Activated CD4-positive, alpha-beta memory T cell treated with anti-CD3 and anti-CD28 coated beads for 36 hours (primary cell): ENCODE measurements at regions of chr20 and their contacts with region 1.

Region 1: DNA sequence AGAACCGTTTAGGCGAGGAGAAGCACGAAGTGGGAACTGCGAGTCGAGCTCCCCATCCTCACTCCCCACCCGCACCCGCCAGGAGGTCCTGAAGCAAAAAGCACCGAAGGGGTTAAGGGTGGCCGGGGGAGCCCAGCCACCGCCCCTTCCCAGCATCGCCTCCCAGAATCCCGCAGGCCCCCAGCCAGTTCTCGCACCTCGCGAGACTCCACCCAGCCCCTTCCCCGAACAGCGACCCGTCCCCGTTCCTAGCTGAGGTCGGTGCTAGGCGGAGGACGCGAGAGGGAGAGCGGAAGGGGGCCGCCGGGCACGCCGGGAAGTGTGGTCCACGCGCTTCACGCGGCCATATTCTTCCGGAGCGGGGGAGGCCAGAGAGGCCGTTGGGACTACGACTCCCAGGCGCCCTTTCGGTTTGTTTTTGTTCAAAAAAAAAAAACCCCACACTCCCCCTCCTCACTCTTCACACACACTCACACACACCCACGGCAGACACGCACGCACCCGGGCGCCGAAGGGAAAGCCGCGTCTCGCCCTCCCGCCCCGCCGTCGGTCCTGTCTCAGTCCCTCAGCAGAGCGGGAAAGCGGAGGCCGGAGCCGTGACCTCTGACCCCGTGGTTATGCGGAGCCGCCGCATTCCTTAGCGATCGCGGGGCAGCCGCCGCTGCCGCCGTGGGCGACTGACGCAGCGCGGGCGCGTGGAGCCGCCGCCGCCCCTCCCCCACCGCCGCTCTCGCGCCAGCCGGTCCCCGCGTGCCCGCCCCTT is at the start of gene ASXL1:
- DNase-seq: peak; percentile 98
- H3K4me3 Mint-ChIP-seq: peak within 1 kb of the TSS; percentile 95
- H3K27ac Mint-ChIP-seq: peak within 1 kb of the TSS; percentile 99
- H3K4me1 Mint-ChIP-seq: peaks cover 64% of the 10 kb centered on the region
- H3K27me3 Mint-ChIP-seq: no peaks in the 10 kb centered on the region
- total RNA-seq, gene ASXL1: 141 to 147 TPM

Region 2: DNA sequence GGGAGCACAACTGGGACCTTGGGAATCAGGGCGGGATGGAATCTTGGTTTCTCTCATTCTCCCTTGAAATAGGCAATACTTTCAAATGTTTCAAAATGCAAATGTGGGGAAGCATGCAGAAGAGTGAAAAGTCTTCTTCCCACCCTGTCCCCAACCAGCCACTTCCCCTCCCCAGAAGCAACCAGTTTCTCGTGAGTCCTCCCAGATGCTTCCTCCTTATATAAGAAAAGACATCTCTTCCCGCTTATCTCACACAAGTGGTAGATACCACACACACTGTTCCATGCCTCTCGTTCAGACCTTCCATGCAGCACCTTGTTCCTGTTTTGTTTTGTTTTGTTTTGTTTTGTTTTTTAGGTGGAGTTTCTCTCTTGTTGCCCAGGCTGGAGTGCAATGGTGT is 280.9 kb before region 1 on chr20:
- CTCF ChIA-PET with region 1: no interaction called
- POLR2A ChIA-PET with region 1: no interaction called
- intact Hi-C with region 1: no loop called
- DNase-seq: no peak
- H3K4me3 Mint-ChIP-seq: no peak overlapping the region
- H3K27ac Mint-ChIP-seq: no peak overlapping the region
- H3K4me1 Mint-ChIP-seq: no peaks in the 10 kb centered on the region
- H3K27me3 Mint-ChIP-seq: peaks cover 6% of the 10 kb centered on the region

Region 3: GRCh38 chr20:32207626-32208498 is 150.2 kb before region 1 on chr20 and contains the starts of genes PLAGL2 and POFUT1:
- CTCF ChIA-PET with region 1: interaction called, 3 read pairs
- POLR2A ChIA-PET with region 1: interaction called, 62 read pairs
- intact Hi-C with region 1: loop called (anchors 1 kb)
- DNase-seq: peak; percentile 93
- H3K4me3 Mint-ChIP-seq: peak within 1 kb of the TSS; percentile 99
- H3K27ac Mint-ChIP-seq: peak within 1 kb of the TSS; percentile 95
- H3K4me1 Mint-ChIP-seq: peaks cover 65% of the 10 kb centered on the region
- H3K27me3 Mint-ChIP-seq: no peaks in the 10 kb centered on the region
- total RNA-seq, gene PLAGL2: 93.9 to 95.6 TPM
- total RNA-seq, gene POFUT1: 48.4 to 48.5 TPM

Region 4: GRCh38 chr20:32285621-32286371 is 72.3 kb before region 1 on chr20:
- CTCF ChIA-PET with region 1: no interaction called
- POLR2A ChIA-PET with region 1: interaction called, 15 read pairs
- intact Hi-C with region 1: loop called (anchors 1 kb)
- DNase-seq: peak; percentile 69
- H3K4me3 Mint-ChIP-seq: peak overlapping the region; percentile 62
- H3K27ac Mint-ChIP-seq: peak overlapping the region; percentile 91
- H3K4me1 Mint-ChIP-seq: peaks cover 85% of the 10 kb centered on the region
- H3K27me3 Mint-ChIP-seq: no peaks in the 10 kb centered on the region

Region 5: DNA sequence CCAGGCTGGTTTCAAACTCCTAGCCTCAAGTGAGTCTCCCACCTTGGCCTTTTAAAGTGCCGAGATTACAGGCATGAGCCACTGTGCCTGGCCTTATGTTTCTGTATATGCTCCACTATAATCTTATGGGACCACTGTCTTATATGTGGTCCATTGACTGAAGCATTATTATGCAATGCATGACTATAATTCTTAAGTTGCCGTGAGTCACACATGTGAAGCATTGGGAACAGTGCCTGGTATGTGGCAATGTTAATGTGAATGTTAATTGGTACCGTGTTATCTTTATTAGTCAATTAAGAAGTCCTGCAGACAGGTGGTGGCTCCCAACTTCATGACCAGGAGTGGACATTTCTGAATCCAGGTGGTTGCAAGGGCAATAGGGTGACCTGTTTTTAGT is 14.6 kb before region 1 on chr20:
- CTCF ChIA-PET with region 1: no interaction called
- POLR2A ChIA-PET with region 1: no interaction called
- intact Hi-C with region 1: no loop called
- DNase-seq: no peak
- H3K4me3 Mint-ChIP-seq: no peak overlapping the region
- H3K27ac Mint-ChIP-seq: no peak overlapping the region
- H3K4me1 Mint-ChIP-seq: peaks cover 6% of the 10 kb centered on the region
- H3K27me3 Mint-ChIP-seq: no peaks in the 10 kb centered on the region

Region 6: DNA sequence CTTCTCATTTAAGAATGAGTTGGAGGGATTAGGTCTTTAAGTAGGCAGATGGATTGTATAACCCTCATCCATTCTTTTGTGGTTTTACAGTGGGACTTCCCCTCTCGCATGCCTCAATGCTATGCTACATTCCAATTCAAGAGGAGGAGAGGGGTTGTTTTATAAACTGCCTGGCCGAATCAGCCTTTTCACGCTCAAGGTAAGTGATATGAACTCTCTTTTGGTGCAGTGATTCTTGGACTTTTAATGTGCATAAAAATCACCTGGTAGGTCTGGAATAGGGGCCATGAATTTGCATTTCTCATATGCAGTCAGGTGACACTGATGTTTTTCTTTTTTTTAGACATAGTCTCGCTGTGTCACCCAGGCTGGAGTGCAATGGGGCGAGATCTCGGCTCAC is 10.9 kb after region 1 on chr20:
- CTCF ChIA-PET with region 1: no interaction called
- POLR2A ChIA-PET with region 1: interaction called, 5 read pairs
- intact Hi-C with region 1: loop called (anchors 1 kb)
- DNase-seq: no peak
- H3K4me3 Mint-ChIP-seq: no peak overlapping the region
- H3K27ac Mint-ChIP-seq: no peak overlapping the region
- H3K4me1 Mint-ChIP-seq: peaks cover 45% of the 10 kb centered on the region
- H3K27me3 Mint-ChIP-seq: no peaks in the 10 kb centered on the region

Region 7: GRCh38 chr20:32535953-32536823 is 178.1 kb after region 1 on chr20:
- CTCF ChIA-PET with region 1: no interaction called
- POLR2A ChIA-PET with region 1: interaction called, 4 read pairs
- intact Hi-C with region 1: loop called (anchors 5 kb)
- DNase-seq: peak; percentile 84
- H3K4me3 Mint-ChIP-seq: peak overlapping the region; percentile 72
- H3K27ac Mint-ChIP-seq: peak overlapping the region; percentile 89
- H3K4me1 Mint-ChIP-seq: peaks cover 74% of the 10 kb centered on the region
- H3K27me3 Mint-ChIP-seq: no peaks in the 10 kb centered on the region